Activated CD4-positive, alpha-beta memory T cell treated with anti-CD3 and anti-CD28 coated beads for 36 hours (primary cell): ENCODE measurements at regions of chr2 and their contacts with region 1.

Region 1: DNA sequence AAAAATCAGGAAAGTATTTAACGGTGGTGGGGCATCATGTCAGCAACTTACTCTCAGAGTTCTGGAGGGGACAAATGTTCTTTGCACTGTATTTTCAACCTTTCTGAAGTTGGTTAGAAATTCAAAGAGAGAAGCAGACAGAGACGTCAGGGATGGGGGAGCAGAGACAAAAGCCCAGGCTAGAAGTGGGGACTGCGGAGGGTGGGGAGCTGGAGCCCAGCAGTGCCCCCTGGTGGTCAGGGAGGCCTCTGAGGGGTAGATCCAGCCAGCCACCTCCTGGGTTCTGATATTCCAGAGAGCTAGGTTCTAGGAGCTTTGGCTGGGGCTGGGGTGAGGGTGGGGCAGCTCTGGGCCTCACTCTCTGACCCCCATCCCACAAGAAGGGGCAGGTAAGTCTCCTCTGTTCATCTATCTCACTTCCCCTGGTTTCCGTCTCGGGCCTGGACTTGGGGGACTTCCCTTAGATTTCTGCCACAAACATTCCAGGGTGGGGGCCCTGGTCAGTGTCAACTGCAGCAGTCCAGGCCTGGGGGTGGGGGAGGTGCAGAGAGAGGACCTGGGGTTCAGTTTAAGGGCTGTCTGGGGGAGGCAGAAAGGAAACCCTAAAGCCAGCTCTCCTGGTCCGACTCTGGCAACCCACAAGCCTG is 8.9 kb downstream of the TNS1 start:
- DNase-seq: peak; percentile 68
- H3K4me3 Mint-ChIP-seq: no peak overlapping the region
- H3K27ac Mint-ChIP-seq: no peak overlapping the region
- H3K4me1 Mint-ChIP-seq: no peaks in the 10 kb centered on the region
- H3K27me3 Mint-ChIP-seq: peaks cover 5% of the 10 kb centered on the region

Region 2: GRCh38 chr2:216949700-216950413 is 1044.1 kb before region 1 on chr2:
- CTCF ChIA-PET with region 1: no interaction called
- POLR2A ChIA-PET with region 1: no interaction called
- intact Hi-C with region 1: no loop called
- DNase-seq: no peak
- H3K4me3 Mint-ChIP-seq: no peak overlapping the region
- H3K27ac Mint-ChIP-seq: no peak overlapping the region
- H3K4me1 Mint-ChIP-seq: no peaks in the 10 kb centered on the region
- H3K27me3 Mint-ChIP-seq: peaks cover 2% of the 10 kb centered on the region

Region 3: DNA sequence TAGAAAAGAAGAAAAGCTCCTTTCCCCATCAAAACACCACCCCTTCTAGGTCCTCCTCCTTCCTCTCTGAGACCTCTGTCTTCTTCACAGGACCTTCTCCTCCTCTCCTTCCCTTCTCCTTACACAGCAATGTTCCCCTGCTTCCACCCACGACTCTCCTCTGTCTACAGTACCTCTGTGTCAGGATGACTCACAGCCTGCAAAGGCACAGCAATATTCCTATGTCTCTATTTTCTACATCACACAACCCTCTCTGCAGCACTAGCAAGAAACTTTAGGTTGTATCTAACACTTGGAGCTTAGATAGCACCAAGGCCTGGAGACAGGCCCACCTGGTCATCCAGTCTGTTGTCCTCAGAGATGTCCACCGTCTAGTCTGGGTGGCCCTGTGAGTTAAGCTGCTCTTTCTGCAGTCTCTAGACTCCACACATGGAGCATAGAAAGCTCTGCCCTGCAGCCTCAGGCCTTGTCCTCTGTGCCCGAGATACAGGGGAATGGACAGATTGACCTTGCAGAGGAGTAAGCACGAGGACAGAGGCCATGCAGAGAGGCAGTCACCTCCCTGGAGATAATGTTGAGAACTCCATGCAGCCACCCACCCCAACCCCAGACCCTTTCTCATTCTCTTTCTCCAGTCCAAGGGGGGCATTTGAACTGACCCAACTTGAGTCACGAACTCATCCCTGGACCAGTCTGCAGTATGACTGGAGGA is 203.1 kb before region 1 on chr2:
- CTCF ChIA-PET with region 1: interaction called, 57 read pairs
- POLR2A ChIA-PET with region 1: no interaction called
- intact Hi-C with region 1: no loop called
- DNase-seq: no peak
- H3K4me3 Mint-ChIP-seq: peak overlapping the region; percentile 66
- H3K27ac Mint-ChIP-seq: peak overlapping the region; percentile 21
- H3K4me1 Mint-ChIP-seq: peaks cover 12% of the 10 kb centered on the region
- H3K27me3 Mint-ChIP-seq: no peaks in the 10 kb centered on the region

Region 4: GRCh38 chr2:218003981-218004419 is 10.1 kb after region 1 on chr2:
- CTCF ChIA-PET with region 1: interaction called, 10 read pairs
- POLR2A ChIA-PET with region 1: no interaction called
- intact Hi-C with region 1: no loop called
- DNase-seq: no peak
- H3K4me3 Mint-ChIP-seq: no peak overlapping the region
- H3K27ac Mint-ChIP-seq: no peak overlapping the region
- H3K4me1 Mint-ChIP-seq: peaks cover 10% of the 10 kb centered on the region
- H3K27me3 Mint-ChIP-seq: peaks cover 3% of the 10 kb centered on the region

Region 5: GRCh38 chr2:218063486-218063885 is 69.5 kb after region 1 on chr2:
- CTCF ChIA-PET with region 1: no interaction called
- POLR2A ChIA-PET with region 1: no interaction called
- intact Hi-C with region 1: no loop called
- DNase-seq: no peak
- H3K4me3 Mint-ChIP-seq: no peak overlapping the region
- H3K27ac Mint-ChIP-seq: no peak overlapping the region
- H3K4me1 Mint-ChIP-seq: peaks cover under 1% of the 10 kb centered on the region
- H3K27me3 Mint-ChIP-seq: peaks cover 26% of the 10 kb centered on the region

Region 6: DNA sequence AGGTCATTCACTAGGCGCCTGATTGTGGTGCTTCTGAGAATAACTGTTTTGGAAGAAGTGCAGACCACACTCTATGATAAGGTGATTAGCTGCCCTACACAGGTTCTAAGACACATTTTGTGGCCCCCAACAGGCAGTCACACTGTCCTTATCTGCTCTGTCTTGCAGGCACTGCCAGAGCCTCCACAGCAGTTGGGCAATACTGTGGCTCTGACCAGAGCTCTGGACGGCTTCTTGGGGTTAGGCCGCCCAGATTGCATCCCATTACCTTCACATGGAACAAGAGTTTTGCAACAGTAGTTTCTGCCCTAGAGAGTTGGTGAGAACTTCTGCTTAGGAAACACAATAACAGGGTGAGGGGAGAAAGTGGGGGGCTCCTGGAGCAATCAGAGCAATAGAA is 97.8 kb after region 1 on chr2:
- CTCF ChIA-PET with region 1: no interaction called
- POLR2A ChIA-PET with region 1: no interaction called
- intact Hi-C with region 1: no loop called
- DNase-seq: no peak
- H3K4me3 Mint-ChIP-seq: no peak overlapping the region
- H3K27ac Mint-ChIP-seq: no peak overlapping the region
- H3K4me1 Mint-ChIP-seq: no peaks in the 10 kb centered on the region
- H3K27me3 Mint-ChIP-seq: no peaks in the 10 kb centered on the region